Cardiac septum (tissue), 1 donor: ENCODE measurements at regions of chr2 and their contacts with region 1.

Region 1: DNA sequence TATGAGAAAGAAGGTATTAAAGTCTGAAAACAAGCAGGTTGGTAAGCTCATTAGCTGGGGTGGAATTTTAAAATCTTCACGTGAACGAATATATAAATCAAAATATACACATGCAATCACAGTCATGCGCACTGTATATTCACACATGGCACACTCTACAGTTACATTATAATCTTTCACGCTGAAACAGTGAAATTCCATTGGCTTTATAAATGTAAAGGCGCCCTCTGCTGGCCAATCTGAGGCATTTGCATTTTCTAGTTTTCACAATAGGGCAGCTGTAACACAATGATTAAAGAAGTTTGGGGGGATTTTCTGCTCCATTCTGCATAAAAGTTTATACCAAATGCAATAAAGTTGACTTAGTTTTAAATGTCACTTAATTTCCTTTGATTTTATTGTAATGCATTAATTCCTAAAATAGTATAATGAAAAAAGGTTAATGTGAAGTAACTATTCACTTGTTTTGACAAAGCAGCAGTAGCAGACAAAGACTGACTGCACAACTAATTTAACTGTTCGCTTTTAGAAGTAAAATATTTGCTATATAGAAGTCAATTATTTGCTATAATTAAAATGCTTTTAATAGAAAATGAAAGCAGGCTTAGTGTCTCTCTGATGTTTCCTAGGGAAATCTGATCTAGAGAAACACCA is 17.2 kb downstream of the IFIH1 start:
- DNase-seq: no peak

Region 2: GRCh38 chr2:161586517-161587167 is 714.6 kb before region 1 on chr2:
- intact Hi-C with region 1: loop called (anchors 10 kb)
- DNase-seq: no peak

Region 3: DNA sequence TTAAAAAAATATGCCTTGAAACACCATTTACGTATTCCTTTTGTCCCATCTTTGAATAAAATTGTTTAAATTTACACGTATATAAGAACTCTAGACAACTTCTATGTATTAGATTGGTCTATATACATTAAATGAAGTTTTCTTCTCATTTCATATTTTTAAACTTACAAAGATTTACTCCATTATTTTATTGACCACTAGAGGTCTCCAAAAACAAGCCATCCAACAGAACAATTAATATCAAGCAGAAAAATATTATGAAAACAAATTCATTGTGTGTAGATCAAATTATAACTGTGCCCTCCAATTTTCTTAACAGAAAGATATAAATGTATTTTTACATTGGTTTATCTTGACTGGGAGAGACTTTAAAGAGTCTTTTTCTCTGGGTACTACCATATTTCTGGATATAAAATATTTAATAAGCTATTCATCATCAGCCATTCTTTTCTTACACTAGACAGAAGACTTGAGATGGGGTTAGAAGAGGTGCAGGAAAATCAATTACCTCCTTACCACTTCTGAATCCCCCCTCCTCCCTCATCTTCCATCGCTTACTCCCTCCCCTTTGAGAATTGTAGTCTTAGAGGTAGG is 293.7 kb before region 1 on chr2:
- intact Hi-C with region 1: loop called (anchors 10 kb)
- DNase-seq: no peak

Region 4: DNA sequence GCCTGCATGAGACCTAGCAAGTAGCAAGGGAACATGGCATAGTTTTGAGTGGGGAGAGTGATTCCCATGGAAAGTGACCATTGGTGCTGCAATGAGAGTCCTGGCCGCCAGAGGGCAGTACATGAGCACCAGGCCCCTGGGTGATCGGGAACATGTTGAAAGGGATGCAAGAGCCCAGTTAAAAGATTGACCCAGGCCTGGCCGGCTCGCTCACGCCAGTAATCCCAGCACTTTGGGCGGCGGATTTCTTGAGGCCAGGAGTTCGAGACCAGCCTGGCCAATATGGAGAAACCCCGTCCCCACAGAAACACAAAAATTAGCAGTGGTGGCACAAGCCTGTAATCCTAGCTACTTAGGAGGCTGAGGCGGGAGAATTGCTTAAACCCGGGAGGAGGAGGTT is 80.2 kb before region 1 on chr2:
- intact Hi-C with region 1: loop called (anchors 1 kb)
- DNase-seq: peak; percentile 82